Heart right ventricle (tissue), 16 donors: ENCODE measurements at regions of chr6 and their contacts with region 1.

Region 1: GRCh38 chr6:133062077-133062476 is 179.1 kb upstream of the EYA4 start:
- DNase-seq: peak in 1 of 2 donors; percentile 60
- ATAC-seq: peak; percentile 79 to 98 (median 96)
- H3K4me3 ChIP-seq: no peak overlapping the region
- H3K27ac ChIP-seq: peak overlapping the region in 9 of 10 donors; percentile 13 to 78 (median 62)
- H3K4me1 ChIP-seq: peaks cover 0 to 12% (median 0%) of the 10 kb centered on the region in 9 donors
- H3K27me3 ChIP-seq: no peaks in the 10 kb centered on the region
- CTCF ChIP-seq: no peak

Region 2: GRCh38 chr6:133088931-133089695 is 27.0 kb after region 1 on chr6:
- intact Hi-C with region 1: loop called in 1 of 10 experiments (anchors 1 kb)
- DNase-seq: no peak
- ATAC-seq: no peak
- H3K4me3 ChIP-seq: no peak overlapping the region
- H3K27ac ChIP-seq: no peak overlapping the region
- H3K4me1 ChIP-seq: peaks cover 0 to 6% (median 0%) of the 10 kb centered on the region in 9 donors
- H3K27me3 ChIP-seq: no peaks in the 10 kb centered on the region
- CTCF ChIP-seq: no peak

Region 3: GRCh38 chr6:133241086-133241900 is 179.2 kb after region 1 on chr6 and contains the start of gene EYA4:
- intact Hi-C with region 1: loop called in 2 of 10 experiments (anchors 5 to 10 kb)
- DNase-seq: peak; percentile 27 to 50
- ATAC-seq: peak; percentile 64 to 88 (median 71)
- H3K4me3 ChIP-seq: peak within 1 kb of the TSS; percentile 24 to 73 (median 62)
- H3K27ac ChIP-seq: peak within 1 kb of the TSS; percentile 66 to 93 (median 86)
- H3K4me1 ChIP-seq: peaks cover 0 to 19% (median 3%) of the 10 kb centered on the region in 9 donors
- H3K27me3 ChIP-seq: peaks cover 0 to 66% (median 54%) of the 10 kb centered on the region in 7 donors
- CTCF ChIP-seq: peak in 2 of 9 donors; percentile 7 to 26
- total RNA-seq, gene EYA4: 10.6 to 30.2 (median 19.6) TPM